ENCODE measurements at regions of chr10 and their contacts with region 1.

Region 1: GRCh38 chr10:71212318-71213126 is at the start of gene UNC5B:
- DNase-seq: peak; percentile 85 to 94 (median 90)
- ATAC-seq: peak; percentile 94
- H3K4me3 ChIP-seq: peak within 1 kb of the TSS; percentile 53
- H3K27ac ChIP-seq: no peak within 1 kb of the TSS
- H3K4me1 ChIP-seq: peaks cover 4 to 38% of the 10 kb centered on the region in 2 experiments; a peak in 4 of 5 replicates
- H3K27me3 ChIP-seq: peaks cover 26 to 68% of the 10 kb centered on the region in 2 experiments; a peak in 4 of 5 replicates
- CTCF ChIP-seq: peak; percentile 13 to 68 (median 58); a peak in 4 of 6 replicates
- EP300 ChIP-seq: no peak
- POLR2A ChIP-seq: no peak
- RAD21 ChIP-seq: peak; percentile 45 to 54; a peak in 3 of 4 replicates
- polyA plus RNA-seq, gene UNC5B: 0.10 to 0.11 TPM

Region 2: DNA sequence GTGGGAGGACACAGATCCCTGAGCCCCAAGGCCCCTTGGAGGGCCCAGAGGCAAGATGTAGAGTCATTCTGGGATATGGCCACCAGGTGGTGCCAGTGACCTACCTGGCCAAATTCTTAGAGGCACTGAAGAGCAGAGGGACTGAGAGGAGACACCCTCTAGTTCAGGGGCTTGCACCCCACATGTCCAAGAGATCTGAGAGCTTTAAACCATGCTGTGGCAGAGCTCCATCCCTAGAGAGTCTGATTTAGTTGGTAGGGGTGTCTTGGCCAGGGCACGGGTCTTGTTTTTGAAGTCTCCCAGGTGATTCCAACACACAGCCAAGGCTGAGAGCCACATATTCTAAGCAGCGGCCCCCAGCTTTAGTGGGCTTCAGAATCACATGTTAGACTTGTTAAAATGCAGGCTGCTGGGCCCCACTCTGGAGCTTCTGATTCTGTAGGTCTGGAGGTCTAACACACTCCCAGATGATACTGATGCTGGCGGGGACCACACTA is 662.5 kb before region 1 on chr10:
- CTCF ChIA-PET with region 1: no interaction called
- POLR2A ChIA-PET with region 1: no interaction called
- in situ Hi-C with region 1: no loop called
- intact Hi-C with region 1: loop called (anchors 10 kb)
- DNase-seq: peak; percentile 82 to 87 (median 84)
- ATAC-seq: peak; percentile 97
- H3K4me3 ChIP-seq: no peak overlapping the region
- H3K27ac ChIP-seq: no peak overlapping the region
- H3K4me1 ChIP-seq: peaks cover 8 to 13% of the 10 kb centered on the region in 2 experiments
- H3K27me3 ChIP-seq: no peaks in the 10 kb centered on the region
- CTCF ChIP-seq: peak; percentile 92 to 96 (median 95)
- EP300 ChIP-seq: no peak
- POLR2A ChIP-seq: no peak
- RAD21 ChIP-seq: peak; percentile 98 to 99

Region 3: GRCh38 chr10:70925377-70926225 is 286.9 kb before region 1 on chr10:
- CTCF ChIA-PET with region 1: interaction called, 10 read pairs
- POLR2A ChIA-PET with region 1: interaction called, 3 read pairs
- in situ Hi-C with region 1: no loop called
- intact Hi-C with region 1: loop called (anchors 1 kb)
- DNase-seq: peak; percentile 71 to 93 (median 88)
- ATAC-seq: peak; percentile 94
- H3K4me3 ChIP-seq: no peak overlapping the region
- H3K27ac ChIP-seq: no peak overlapping the region
- H3K4me1 ChIP-seq: peaks cover 0 to 9% of the 10 kb centered on the region in 2 experiments; a peak in 2 of 5 replicates
- H3K27me3 ChIP-seq: peaks cover 21 to 76% of the 10 kb centered on the region in 2 experiments
- CTCF ChIP-seq: peak; percentile 95 to 97 (median 95)
- EP300 ChIP-seq: no peak
- POLR2A ChIP-seq: no peak
- RAD21 ChIP-seq: peak; percentile 89 to 94

Region 4: GRCh38 chr10:71176661-71177060 is 35.9 kb before region 1 on chr10:
- CTCF ChIA-PET with region 1: no interaction called
- POLR2A ChIA-PET with region 1: no interaction called
- in situ Hi-C with region 1: no loop called
- intact Hi-C with region 1: no loop called
- DNase-seq: no peak
- ATAC-seq: no peak
- H3K4me3 ChIP-seq: no peak overlapping the region
- H3K27ac ChIP-seq: no peak overlapping the region
- H3K4me1 ChIP-seq: no peaks in the 10 kb centered on the region
- H3K27me3 ChIP-seq: peaks cover 31 to 66% of the 10 kb centered on the region in 2 experiments
- CTCF ChIP-seq: no peak
- EP300 ChIP-seq: no peak
- POLR2A ChIP-seq: no peak
- RAD21 ChIP-seq: no peak

Region 5: DNA sequence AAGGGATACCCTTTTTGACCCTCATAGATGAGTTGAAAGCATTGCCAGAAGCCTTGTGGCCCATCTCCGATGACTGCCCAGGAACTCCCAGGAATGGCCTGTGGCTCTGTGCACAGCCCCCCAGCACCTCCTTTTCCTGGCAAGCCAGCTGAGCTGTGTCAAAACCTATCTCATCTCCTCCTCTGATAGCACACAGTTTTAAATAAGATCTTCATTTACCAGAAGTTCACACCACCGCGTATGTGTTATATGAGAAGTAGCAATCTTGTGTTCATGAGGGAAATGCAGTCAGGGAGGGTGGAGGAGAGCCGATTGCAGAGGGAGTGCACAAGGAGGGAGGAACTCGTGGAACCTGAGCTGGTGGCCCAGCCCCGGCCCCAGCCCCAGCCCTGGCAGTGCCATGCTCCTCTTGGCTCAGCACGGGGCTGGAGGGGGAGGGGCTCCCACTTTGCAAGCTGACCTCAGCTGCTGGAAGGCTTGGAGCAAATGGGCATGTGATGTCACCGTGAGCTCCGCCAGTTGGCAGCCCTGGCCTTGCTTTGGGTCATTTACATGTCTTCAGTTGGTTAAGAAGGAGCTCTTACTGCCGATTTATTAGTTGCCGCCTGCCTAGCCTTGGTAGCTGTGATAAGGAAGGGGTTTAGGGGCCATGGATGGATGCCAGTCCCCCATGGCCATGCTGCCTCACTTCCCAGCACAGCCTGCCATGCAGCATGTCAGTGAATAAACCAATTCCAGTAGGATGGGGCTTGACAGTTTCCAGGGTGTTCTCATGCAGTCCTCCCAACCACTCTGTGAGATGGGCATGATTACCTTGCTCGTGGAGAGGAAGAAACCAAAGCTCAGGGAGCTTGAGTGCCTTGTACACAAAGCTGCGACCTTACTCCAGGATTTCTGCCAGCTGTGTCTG is 19.8 kb after region 1 on chr10:
- CTCF ChIA-PET with region 1: no interaction called
- POLR2A ChIA-PET with region 1: interaction called, 14 read pairs
- in situ Hi-C with region 1: no loop called
- intact Hi-C with region 1: no loop called
- DNase-seq: no peak
- ATAC-seq: no peak
- H3K4me3 ChIP-seq: no peak overlapping the region
- H3K27ac ChIP-seq: no peak overlapping the region
- H3K4me1 ChIP-seq: peaks cover 47% of the 10 kb centered on the region in 2 experiments
- H3K27me3 ChIP-seq: peaks cover 0 to 16% of the 10 kb centered on the region in 2 experiments; a peak in 2 of 5 replicates
- CTCF ChIP-seq: no peak
- EP300 ChIP-seq: no peak
- POLR2A ChIP-seq: no peak
- RAD21 ChIP-seq: no peak

Region 6: DNA sequence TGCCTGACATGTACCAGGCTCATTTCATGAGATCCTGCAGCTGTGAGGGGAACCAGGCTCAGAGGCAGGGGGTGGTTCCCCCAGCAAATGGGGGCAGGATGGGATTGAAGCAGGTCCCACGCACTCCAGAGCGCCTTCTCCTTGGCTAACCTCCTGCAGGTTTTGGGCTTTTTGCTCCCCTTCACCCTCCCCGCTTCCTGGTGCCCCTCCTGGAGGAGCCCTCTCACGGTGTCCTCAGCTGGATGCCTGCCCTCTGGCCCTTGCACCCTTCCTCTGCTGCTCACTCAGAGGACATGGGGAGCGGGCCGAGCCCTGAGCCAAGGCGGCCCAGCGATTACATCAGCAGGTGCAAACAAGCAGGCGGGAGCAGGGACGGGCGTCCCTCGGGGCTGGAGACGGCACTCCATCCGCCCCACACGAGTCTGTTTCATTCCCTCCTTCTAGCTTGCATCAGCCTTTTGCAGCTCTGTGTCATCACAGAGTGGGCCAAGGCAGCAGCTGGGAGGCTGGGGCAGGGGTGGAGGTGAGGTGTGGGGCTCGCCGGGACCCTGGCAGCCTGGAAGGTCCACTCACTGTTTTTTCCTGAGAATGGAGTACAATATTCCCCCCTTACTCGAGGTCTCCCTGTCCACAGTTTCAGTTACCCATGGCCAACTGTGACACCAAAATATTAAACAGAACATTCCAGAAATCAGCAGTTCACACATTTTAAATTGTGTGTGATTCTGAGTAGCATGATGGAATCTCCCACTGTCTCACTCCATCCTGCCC is 53.8 kb after region 1 on chr10:
- CTCF ChIA-PET with region 1: interaction called, 4 read pairs
- POLR2A ChIA-PET with region 1: interaction called, 7 read pairs
- in situ Hi-C with region 1: no loop called
- intact Hi-C with region 1: loop called (anchors 2 kb)
- DNase-seq: peak; percentile 48 to 74 (median 60)
- ATAC-seq: peak; percentile 89
- H3K4me3 ChIP-seq: no peak overlapping the region
- H3K27ac ChIP-seq: peak overlapping the region; percentile 67; the same call in 2 of the 3 replicates
- H3K4me1 ChIP-seq: peaks cover 29 to 58% of the 10 kb centered on the region in 2 experiments
- H3K27me3 ChIP-seq: no peaks in the 10 kb centered on the region; a peak in 1 of 5 replicates
- CTCF ChIP-seq: peak in 1 of 3 experiments; percentile 1; a peak in 1 of 6 replicates
- EP300 ChIP-seq: peak; percentile 97
- POLR2A ChIP-seq: no peak
- RAD21 ChIP-seq: peak; percentile 46 to 53; a peak in 3 of 4 replicates

Region 7: GRCh38 chr10:71285180-71285545 is 72.6 kb after region 1 on chr10:
- CTCF ChIA-PET with region 1: interaction called, 10 read pairs
- POLR2A ChIA-PET with region 1: no interaction called
- in situ Hi-C with region 1: no loop called
- intact Hi-C with region 1: no loop called
- DNase-seq: peak; percentile 69 to 87 (median 83)
- ATAC-seq: peak; percentile 85
- H3K4me3 ChIP-seq: no peak overlapping the region
- H3K27ac ChIP-seq: no peak overlapping the region
- H3K4me1 ChIP-seq: peaks cover 0 to 12% of the 10 kb centered on the region in 2 experiments; a peak in 3 of 5 replicates
- H3K27me3 ChIP-seq: peaks cover 0 to 27% of the 10 kb centered on the region in 2 experiments; a peak in 2 of 5 replicates
- CTCF ChIP-seq: peak; percentile 82 to 93 (median 86)
- EP300 ChIP-seq: no peak
- POLR2A ChIP-seq: no peak
- RAD21 ChIP-seq: peak; percentile 79 to 92

Measured in K562 (cell line).